Right ventricle myocardium inferior (tissue), 1 donor: ENCODE measurements at regions of chr12 and their contacts with region 1.

Region 1: DNA sequence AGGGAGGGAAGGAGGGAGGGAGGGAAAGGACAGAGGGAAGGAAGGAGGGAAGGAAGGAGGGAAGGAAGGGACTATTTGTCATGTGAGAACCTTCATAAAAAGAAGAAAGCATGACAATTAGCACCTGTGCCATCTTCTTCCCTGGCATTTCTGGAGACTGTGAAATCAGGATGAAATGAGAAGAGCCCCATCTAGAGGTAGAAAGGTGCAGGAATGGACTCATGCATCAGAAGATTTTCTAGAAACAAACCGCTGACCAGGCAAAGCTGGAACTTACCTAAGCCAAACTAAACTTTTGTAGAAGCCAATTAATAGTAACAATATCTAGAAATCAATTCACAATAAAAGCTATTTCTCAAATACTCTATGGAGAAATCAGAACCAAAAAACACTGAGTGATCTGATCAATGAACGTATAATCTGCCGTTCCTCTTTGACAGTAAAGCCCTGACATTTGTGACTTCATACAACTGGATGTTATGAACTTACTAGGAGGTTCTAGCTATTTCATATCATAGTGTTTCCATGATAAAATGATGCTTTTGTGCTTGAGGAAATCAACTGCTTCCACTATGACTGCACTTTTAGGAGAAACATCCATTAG is 24.4 kb upstream of the CRACR2A start:
- DNase-seq: no peak
- ATAC-seq: peak; percentile 35

Region 2: GRCh38 chr12:3299929-3300832 is 477.1 kb before region 1 on chr12:
- intact Hi-C with region 1: loop called (anchors 1 kb)
- DNase-seq: peak; percentile 89
- ATAC-seq: peak; percentile 83

Region 3: DNA sequence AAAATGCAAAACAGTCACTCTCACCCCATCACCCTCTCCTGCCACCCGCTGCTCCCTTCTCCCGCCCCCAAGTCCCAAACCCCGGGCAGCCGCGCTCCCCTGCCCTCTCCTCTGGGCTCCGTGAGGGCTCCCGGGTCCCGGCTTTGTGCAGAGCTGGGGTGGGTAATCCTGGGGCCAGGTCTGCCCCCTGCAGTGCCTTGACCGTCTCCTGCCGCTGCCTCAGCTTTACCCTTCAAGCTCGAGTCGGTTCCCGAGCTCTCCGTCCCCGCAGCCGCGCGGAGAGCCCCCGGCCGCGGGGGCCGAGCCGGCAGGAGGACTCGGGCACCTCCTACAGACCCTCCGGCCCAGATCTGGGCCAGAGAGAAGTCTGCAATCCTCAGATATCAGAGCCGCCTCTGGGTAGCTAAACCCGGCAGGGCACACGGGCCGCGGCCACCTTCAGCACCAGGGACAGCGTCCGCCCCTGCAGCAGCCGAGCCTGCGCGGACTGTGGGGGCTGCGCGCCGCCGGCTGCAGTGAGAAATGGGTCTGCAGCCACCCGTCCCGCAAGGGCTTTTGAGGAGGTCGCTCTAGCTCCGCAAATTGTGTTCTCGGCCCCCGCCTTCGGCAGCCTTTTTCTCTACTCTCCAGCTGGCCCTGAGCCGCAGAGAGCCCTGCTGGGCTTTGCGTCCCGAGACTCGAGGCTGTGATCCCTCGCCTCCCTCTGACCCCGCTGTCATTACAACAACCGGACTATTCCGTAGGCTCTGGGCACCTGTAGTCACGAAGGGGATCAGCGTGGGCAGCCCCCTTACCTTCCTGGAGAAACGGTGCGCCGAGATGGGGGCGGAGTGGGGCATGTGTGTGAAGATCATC is 285.1 kb before region 1 on chr12:
- intact Hi-C with region 1: loop called (anchors 10 kb)
- DNase-seq: no peak
- ATAC-seq: peak; percentile 76

Region 4: DNA sequence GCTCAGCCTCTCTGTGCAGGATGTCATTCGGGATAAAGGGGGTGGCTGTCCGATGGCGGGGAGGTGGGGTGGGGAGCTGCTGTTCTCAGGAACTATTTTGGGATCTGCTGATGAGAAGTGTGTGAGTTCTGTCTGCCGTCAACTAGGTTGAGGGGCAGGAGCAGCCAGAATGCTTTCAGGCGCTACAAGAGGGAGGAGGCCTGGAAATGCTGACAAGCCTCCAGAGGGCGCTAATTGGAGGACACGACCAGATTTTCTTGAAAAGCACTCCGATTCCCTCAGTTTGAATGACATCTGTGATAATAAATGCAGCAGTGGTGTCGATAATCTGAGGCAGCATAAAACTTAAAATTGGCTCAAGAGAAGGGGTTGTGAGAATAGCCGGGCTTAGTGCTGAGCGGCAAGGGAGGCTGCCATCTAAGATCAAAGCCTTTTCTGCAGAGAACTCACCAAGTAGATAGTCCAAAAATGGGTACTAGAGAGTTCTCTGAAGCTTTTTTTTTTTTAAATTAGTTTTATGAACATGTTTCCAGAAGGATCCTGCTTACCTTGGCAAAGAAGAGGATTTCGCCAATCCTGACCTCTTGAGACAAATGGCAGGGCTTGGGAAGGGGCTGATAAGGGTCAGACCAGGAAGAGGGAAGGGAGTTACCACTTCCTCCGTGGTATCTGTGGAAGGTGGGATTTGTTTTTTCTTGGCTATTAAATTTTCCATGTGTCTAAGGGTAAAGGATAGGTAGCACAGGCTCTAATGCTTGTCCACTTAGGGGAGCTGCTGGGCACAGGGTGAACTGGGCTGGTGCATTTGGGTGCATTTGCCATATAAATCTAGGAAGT is 118.8 kb before region 1 on chr12:
- intact Hi-C with region 1: loop called (anchors 2 kb)
- DNase-seq: no peak
- ATAC-seq: peak; percentile 29

Region 5: GRCh38 chr12:3820122-3820521 is 42.8 kb after region 1 on chr12:
- intact Hi-C with region 1: no loop called
- DNase-seq: no peak
- ATAC-seq: no peak